CD4-positive, alpha-beta T cell (primary cell): ENCODE measurements at regions of chr9 and their contacts with region 1.

Region 1: GRCh38 chr9:92934321-92934720 is 13.0 kb upstream of the FGD3 start:
- DNase-seq: no peak
- ATAC-seq: no peak
- H3K4me3 ChIP-seq: no peak overlapping the region
- H3K4me3 Mint-ChIP-seq: no peak overlapping the region
- H3K27ac ChIP-seq: no peak overlapping the region
- H3K27ac Mint-ChIP-seq: no peak overlapping the region
- H3K4me1 ChIP-seq: no peaks in the 10 kb centered on the region
- H3K4me1 Mint-ChIP-seq: no peaks in the 10 kb centered on the region
- H3K27me3 ChIP-seq: no peaks in the 10 kb centered on the region
- H3K27me3 Mint-ChIP-seq: no peaks in the 10 kb centered on the region
- CTCF ChIP-seq: no peak

Region 2: GRCh38 chr9:92850884-92851283 is 83.4 kb before region 1 on chr9:
- CTCF ChIA-PET with region 1: no interaction called
- POLR2A ChIA-PET with region 1: no interaction called
- intact Hi-C with region 1: no loop called
- DNase-seq: peak in 4 of 14 experiments; percentile 6 to 50 (median 38)
- ATAC-seq: peak; percentile 64
- H3K4me3 ChIP-seq: no peak overlapping the region
- H3K4me3 Mint-ChIP-seq: no peak overlapping the region
- H3K27ac ChIP-seq: no peak overlapping the region
- H3K27ac Mint-ChIP-seq: peak overlapping the region; percentile 19
- H3K4me1 ChIP-seq: peaks cover 3% of the 10 kb centered on the region
- H3K4me1 Mint-ChIP-seq: peaks cover 17% of the 10 kb centered on the region
- H3K27me3 ChIP-seq: no peaks in the 10 kb centered on the region
- H3K27me3 Mint-ChIP-seq: no peaks in the 10 kb centered on the region
- CTCF ChIP-seq: peak; percentile 57

Region 3: GRCh38 chr9:92894711-92895362 is 39.5 kb before region 1 on chr9:
- CTCF ChIA-PET with region 1: no interaction called
- POLR2A ChIA-PET with region 1: no interaction called
- intact Hi-C with region 1: loop called in 1 of 2 experiments (anchors 5 kb)
- DNase-seq: no peak
- ATAC-seq: no peak
- H3K4me3 ChIP-seq: no peak overlapping the region
- H3K4me3 Mint-ChIP-seq: no peak overlapping the region
- H3K27ac ChIP-seq: no peak overlapping the region
- H3K27ac Mint-ChIP-seq: no peak overlapping the region
- H3K4me1 ChIP-seq: peaks cover 2% of the 10 kb centered on the region
- H3K4me1 Mint-ChIP-seq: peaks cover 35% of the 10 kb centered on the region
- H3K27me3 ChIP-seq: no peaks in the 10 kb centered on the region
- H3K27me3 Mint-ChIP-seq: no peaks in the 10 kb centered on the region
- CTCF ChIP-seq: no peak

Region 4: GRCh38 chr9:92917176-92917800 is 17.0 kb before region 1 on chr9:
- CTCF ChIA-PET with region 1: no interaction called
- POLR2A ChIA-PET with region 1: interaction called, 5 read pairs
- intact Hi-C with region 1: loop called in 1 of 2 experiments (anchors 2 kb)
- DNase-seq: no peak
- ATAC-seq: no peak
- H3K4me3 ChIP-seq: no peak overlapping the region
- H3K4me3 Mint-ChIP-seq: no peak overlapping the region
- H3K27ac ChIP-seq: no peak overlapping the region
- H3K27ac Mint-ChIP-seq: no peak overlapping the region
- H3K4me1 ChIP-seq: peaks cover 9% of the 10 kb centered on the region
- H3K4me1 Mint-ChIP-seq: peaks cover 38% of the 10 kb centered on the region
- H3K27me3 ChIP-seq: no peaks in the 10 kb centered on the region
- H3K27me3 Mint-ChIP-seq: no peaks in the 10 kb centered on the region
- CTCF ChIP-seq: no peak